Aorta (tissue), 5 donors: ENCODE measurements at regions of chr4 and their contacts with region 1.

Region 1: DNA sequence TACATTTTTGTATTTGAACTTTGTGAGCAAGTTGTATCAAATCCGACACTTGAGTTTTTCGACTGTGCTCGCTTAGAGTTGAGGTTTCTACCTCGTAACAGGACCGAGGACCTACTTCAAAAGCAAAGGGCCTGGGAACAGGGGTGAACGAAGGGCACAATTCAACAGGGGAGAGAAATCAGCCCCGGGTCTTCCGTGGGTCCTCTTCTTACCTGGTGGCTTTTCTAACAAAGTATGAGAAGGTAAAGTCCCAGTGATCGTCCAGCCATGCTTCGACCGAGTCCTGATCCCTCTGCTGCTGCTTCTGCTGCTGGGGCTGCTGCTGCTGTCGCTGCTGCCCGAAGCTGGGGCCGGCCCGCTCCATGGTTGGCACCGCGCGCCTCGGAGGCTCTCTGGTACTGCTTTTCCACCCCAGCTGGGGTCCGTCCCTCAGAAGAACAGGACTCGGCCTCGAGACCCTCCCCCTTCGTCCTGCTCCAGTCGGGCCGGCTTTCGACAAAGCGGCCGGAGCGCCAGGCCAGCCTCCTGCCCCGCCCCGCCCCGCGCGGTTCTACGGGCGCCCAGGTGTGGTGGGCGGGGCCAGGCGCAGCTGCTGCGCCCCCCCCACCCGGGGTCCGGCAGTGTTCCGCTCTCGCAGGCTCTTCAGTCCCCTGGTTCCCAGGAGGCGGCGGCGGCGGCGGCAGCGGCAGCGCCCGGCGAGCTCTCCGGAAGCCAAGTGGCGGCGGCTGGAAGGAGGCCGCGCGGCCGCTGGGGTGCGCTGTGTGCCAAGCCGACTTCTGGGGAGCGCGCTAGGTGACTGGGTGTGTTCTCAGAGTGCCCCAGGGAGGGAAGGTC is at the start of gene PDE5A:
- DNase-seq: peak; percentile 87 to 94
- ATAC-seq: peak; percentile 89
- H3K4me3 ChIP-seq: peak within 1 kb of the TSS; percentile 63 to 67
- H3K27ac ChIP-seq: peak within 1 kb of the TSS; percentile 89 to 96
- H3K4me1 ChIP-seq: no peaks in the 10 kb centered on the region
- H3K27me3 ChIP-seq: no peaks in the 10 kb centered on the region
- total RNA-seq, gene PDE5A: 196 to 343 TPM

Region 2: DNA sequence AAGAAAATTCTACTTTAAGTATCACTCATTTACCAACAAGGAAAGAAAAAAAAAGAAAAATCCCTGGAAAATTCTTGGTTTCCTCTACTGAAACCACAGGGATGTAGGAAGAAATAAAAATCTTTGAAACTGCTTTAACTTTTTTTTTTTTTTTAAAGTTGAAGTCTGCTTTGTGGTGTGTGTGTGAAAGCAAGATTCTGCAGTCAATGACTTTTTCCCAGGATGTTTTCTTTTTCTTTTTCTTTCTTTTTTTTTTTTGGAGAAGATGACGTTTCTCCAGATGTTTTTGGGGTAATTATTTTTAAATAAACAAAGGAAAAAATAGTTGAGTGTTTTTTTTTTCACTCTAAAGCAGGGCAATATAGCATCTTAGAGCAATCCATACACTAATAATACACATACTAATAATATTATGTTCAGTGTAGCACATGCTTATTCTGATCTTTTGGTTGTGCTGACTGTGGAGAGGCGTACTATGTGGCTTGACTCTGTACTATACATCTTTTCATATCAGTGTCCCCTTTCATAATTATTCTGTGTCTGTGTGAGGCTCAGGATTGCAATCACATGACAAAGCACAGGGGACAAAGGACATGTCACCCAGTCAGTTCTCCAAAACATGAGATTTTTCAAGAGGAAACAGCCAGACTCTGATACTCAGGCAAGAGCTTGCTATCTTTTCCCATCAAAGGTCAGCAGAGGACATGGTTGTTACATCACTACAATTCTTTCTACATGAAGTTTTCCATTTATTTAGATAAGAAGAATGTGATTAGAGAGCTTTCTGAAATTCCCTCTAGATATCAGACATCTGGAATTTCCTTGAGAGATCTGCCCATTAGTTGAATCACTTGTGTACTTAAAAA is 110.9 kb before region 1 on chr4:
- intact Hi-C with region 1: loop called in 1 of 2 experiments (anchors 10 kb)
- DNase-seq: no peak
- ATAC-seq: peak; percentile 43
- H3K4me3 ChIP-seq: no peak overlapping the region
- H3K27ac ChIP-seq: peak overlapping the region; percentile 64 to 87
- H3K4me1 ChIP-seq: peaks cover 5 to 6% of the 10 kb centered on the region in 2 donors
- H3K27me3 ChIP-seq: no peaks in the 10 kb centered on the region

Region 3: DNA sequence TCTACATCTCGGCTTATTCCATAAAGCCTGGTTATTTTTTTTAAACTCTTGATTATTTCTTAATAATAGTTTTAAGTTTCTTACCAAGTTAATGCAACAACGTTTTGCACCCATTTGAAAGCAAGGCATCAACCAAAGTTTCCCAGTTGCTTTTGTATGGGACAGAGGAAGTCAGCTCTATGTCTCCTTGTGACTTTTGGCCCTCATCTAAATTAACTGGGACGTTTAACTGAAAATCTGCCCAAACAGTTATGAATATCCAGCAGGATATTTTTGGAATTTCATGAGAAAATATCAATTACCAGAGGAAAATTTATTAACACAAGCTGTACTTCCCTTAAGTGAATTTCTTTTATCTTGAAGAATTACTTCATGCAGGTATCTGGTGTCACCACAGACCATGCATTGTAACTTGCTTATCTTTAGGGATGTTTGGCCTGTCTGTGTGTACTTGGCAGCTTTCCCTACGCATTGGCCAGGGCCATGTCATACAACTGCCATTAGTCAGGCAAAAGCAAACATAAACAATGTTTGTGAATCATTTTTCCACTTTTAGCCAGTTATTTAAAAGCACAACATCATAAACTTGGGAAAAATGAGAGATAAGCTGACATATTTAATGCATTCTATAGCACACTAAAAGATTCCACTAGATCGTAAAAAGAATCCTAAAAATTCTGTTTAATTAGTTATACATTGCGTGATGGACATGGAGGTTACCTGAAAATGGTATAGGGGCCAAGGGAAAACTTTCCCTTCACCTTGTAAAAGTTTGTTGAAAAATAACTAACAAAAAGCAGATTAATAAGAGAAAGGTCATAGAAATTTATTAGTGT is 101.5 kb after region 1 on chr4:
- intact Hi-C with region 1: loop called in 1 of 2 experiments (anchors 5 kb)
- DNase-seq: peak; percentile 75 to 83
- ATAC-seq: peak; percentile 59
- H3K4me3 ChIP-seq: no peak overlapping the region
- H3K27ac ChIP-seq: peak overlapping the region; percentile 98 to 99
- H3K4me1 ChIP-seq: peaks cover 7 to 19% of the 10 kb centered on the region in 2 donors
- H3K27me3 ChIP-seq: no peaks in the 10 kb centered on the region

Region 4: DNA sequence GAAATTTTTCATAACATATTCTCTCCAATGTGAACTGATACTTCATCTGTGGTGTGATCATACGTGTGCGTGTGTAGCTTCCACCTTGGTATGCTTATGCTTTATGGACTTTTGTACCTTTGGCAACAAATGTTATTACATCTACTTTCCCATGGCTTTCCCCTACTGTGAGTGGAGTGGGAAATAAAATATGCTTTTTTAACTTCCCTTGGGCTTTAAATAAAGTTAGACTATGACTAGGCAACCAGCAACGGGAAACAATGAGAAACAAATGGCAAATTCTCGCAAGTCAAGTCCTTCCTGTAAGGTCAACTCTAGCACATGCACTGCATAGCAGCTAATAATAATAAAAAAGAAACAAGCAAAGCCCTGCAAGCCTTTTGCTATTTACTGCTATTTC is 205.1 kb after region 1 on chr4:
- intact Hi-C with region 1: loop called in 1 of 2 experiments (anchors 2 kb)
- DNase-seq: no peak
- ATAC-seq: peak; percentile 85
- H3K4me3 ChIP-seq: no peak overlapping the region
- H3K27ac ChIP-seq: peak overlapping the region in 1 of 2 donors; percentile 93
- H3K4me1 ChIP-seq: peaks cover 3 to 5% of the 10 kb centered on the region in 2 donors
- H3K27me3 ChIP-seq: no peaks in the 10 kb centered on the region

Region 5: GRCh38 chr4:120277391-120277790 is 648.9 kb after region 1 on chr4:
- intact Hi-C with region 1: no loop called
- DNase-seq: no peak
- ATAC-seq: no peak
- H3K4me3 ChIP-seq: no peak overlapping the region
- H3K27ac ChIP-seq: no peak overlapping the region
- H3K4me1 ChIP-seq: no peaks in the 10 kb centered on the region
- H3K27me3 ChIP-seq: no peaks in the 10 kb centered on the region